GM10248 (cell line): ENCODE measurements at regions of chr1 and their contacts with region 1.

Region 1: GRCh38 chr1:181088079-181089016 is at the start of gene IER5:
- DNase-seq: peak; percentile 94
- CTCF ChIP-seq: no peak

Region 2: DNA sequence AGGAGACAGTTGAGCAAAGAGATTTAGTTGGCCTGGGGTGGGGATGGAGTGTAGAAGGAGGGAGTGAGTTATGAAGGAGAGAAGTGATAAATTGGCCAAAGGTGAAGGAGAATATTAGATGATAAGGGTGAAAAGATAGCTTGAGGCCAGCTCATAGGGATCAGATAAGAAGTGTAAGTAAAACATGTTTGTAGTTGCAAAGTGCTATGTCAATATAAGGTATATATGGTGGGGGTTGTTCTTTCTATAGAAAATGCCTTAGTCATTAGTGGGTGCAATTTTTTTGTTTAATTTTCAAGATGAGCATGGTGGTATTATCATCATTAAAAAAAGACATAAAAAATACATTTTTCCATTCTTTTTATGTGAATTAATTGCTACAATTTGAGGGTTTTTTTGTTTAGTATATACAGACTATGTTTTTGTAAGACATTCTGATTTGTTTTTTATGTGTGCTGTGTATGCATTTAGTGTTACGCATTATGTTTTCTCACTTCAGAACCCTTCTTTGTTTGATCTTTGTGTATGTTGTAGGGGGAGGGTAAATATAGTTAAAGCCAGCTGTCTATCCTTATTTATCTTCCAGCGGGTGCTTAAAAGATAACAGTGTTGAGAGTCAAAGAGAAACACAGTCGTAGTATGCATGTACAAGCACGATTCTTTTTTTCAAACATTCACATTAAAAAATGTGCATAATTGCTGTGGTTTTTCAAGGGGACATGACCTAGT is 273.3 kb before region 1 on chr1:
- CTCF ChIA-PET with region 1: no interaction called
- POLR2A ChIA-PET with region 1: no interaction called
- DNase-seq: no peak
- CTCF ChIP-seq: no peak

Region 3: DNA sequence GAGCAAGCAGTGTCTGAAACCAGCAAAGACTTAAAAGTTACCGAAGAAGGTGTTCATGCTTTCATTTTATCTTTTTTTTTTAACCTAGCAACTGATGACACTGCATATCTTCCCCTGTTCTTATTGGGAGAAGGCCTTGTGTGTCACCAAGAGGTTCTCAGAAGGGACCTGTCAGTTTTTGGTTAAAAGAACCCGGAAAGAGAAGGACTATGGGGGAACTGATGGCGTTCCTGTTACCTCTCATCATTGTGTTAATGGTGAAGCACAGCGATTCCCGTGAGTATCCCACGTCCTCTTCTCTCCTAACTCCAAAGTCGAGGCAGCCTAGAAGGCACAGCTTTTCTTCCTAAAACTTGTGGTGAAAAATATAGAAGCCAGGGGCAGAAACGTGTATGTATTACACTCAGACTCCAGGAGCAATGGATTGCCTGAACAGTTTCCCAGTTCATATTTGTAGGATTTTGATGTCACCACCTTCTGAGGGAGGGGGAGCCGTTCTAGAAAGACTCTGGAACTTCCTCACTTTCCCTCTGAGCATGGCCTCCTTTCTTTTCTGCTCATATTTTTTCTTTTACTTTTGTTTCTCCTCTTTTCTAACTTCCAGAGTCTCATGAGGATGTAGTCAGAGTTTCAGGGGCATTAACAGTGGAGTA is 54.4 kb before region 1 on chr1 and contains the start of gene MR1:
- CTCF ChIA-PET with region 1: interaction called, 8 read pairs
- POLR2A ChIA-PET with region 1: interaction called, 14 read pairs
- DNase-seq: peak; percentile 86
- CTCF ChIP-seq: no peak

Region 4: GRCh38 chr1:181077576-181078242 is 10.6 kb before region 1 on chr1:
- CTCF ChIA-PET with region 1: interaction called, 6 read pairs
- POLR2A ChIA-PET with region 1: interaction called, 12 read pairs
- DNase-seq: no peak
- CTCF ChIP-seq: no peak

Region 5: GRCh38 chr1:181105134-181106021 is 17.0 kb after region 1 on chr1:
- CTCF ChIA-PET with region 1: interaction called, 71 read pairs
- POLR2A ChIA-PET with region 1: interaction called, 110 read pairs
- DNase-seq: peak; percentile 94
- CTCF ChIP-seq: no peak

Region 6: DNA sequence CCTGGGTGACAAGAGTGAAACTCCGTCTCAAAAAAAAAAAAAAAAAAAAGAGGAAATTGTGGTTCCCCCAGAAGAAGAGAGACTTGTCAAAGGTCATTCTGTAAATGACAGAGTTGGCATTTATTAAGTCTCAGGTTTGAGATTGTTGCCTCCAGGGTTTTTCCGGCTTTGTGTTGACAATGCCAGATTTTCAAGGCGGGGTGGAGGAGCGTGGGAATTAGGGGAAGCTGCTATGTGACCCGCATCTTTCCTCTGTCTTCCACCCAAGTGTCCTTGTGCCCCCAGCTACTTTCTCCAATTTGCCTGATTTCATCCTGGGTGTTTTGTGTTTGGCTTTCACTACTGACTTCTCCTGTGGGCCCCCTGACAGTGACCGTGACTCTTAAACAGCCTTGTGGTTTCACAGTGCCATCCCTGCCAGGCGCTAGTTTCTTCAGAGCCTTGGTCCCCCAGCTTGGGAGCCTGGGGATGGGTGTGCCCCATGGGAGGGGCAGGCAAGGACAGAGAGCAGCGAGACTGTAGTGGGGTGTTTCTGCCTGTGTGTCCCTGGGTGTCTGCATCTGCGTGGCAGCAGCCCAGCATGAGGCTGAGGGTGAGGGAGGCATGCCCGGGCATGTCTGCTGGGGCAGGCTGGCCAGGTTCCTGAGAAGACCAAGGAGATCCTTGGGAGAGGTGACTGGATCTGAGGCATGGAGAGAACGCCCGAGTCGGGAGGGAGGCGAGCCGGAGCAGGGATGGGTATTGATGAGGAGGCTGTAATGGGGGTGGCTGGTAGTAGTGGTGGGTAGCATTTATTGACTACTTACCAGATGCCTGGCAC is 46.4 kb after region 1 on chr1:
- CTCF ChIA-PET with region 1: interaction called, 66 read pairs
- POLR2A ChIA-PET with region 1: interaction called, 38 read pairs
- DNase-seq: peak; percentile 73
- CTCF ChIP-seq: no peak

Region 7: GRCh38 chr1:181557313-181557712 is 469.0 kb after region 1 on chr1:
- CTCF ChIA-PET with region 1: no interaction called
- POLR2A ChIA-PET with region 1: no interaction called
- DNase-seq: no peak
- CTCF ChIP-seq: no peak